Posterior vena cava (tissue), 2 donors: ENCODE measurements at regions of chr5 and their contacts with region 1.

Region 1: GRCh38 chr5:12592228-12592627 is 688.0 kb upstream of the CTNND2 start:
- DNase-seq: no peak

Region 2: GRCh38 chr5:11239261-11240015 is 1352.8 kb before region 1 on chr5:
- intact Hi-C with region 1: loop called in 1 of 2 experiments (anchors 5 kb)
- DNase-seq: no peak